HEK293 (cell line): ENCODE measurements at regions of chr10 and their contacts with region 1.

Region 1: GRCh38 chr10:86960003-86960862 is 1.8 kb downstream of the SNCG start:
- H3K4me3 ChIP-seq: no peak overlapping the region
- H3K27ac ChIP-seq: no peak overlapping the region
- H3K4me1 ChIP-seq: no peaks in the 10 kb centered on the region
- CTCF ChIP-seq: peak; percentile 81

Region 2: GRCh38 chr10:86918022-86918471 is 42.2 kb before region 1 on chr10:
- CTCF ChIA-PET with region 1: no interaction called
- POLR2A ChIA-PET with region 1: no interaction called
- H3K4me3 ChIP-seq: no peak overlapping the region
- H3K27ac ChIP-seq: no peak overlapping the region
- H3K4me1 ChIP-seq: no peaks in the 10 kb centered on the region; the same call in 1 of the 2 replicates
- CTCF ChIP-seq: no peak

Region 3: GRCh38 chr10:86970162-86970981 is 10.1 kb after region 1 on chr10:
- CTCF ChIA-PET with region 1: interaction called, 14 read pairs
- POLR2A ChIA-PET with region 1: interaction called, 4 read pairs
- H3K4me3 ChIP-seq: peak overlapping the region; percentile 42
- H3K27ac ChIP-seq: peak overlapping the region; percentile 62; the same call in 1 of the 2 replicates
- H3K4me1 ChIP-seq: peaks cover 2% of the 10 kb centered on the region; the same call in 1 of the 2 replicates
- CTCF ChIP-seq: no peak

Region 4: DNA sequence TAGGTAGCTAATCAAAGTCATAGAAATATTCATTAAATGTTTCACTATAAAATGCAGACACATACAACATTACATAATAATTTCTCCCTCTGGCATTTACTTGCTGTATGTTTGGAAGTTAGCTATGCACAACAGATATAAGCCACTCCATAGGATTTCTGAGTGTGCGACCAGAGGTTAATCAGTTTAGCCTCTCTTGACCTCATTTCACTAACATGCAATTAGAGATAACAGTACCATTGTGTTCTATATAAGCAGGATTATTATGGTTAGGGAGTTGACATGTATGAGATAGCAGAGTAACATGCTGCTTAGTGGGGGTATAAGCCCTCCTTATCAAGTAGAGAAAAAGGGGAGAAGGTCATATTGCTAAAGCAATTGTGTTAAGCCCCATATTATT is 108.0 kb after region 1 on chr10:
- CTCF ChIA-PET with region 1: no interaction called
- POLR2A ChIA-PET with region 1: no interaction called
- H3K4me3 ChIP-seq: no peak overlapping the region
- H3K27ac ChIP-seq: no peak overlapping the region
- H3K4me1 ChIP-seq: no peaks in the 10 kb centered on the region
- CTCF ChIP-seq: no peak

Region 5: GRCh38 chr10:87079106-87079836 is 119.0 kb after region 1 on chr10:
- CTCF ChIA-PET with region 1: no interaction called
- POLR2A ChIA-PET with region 1: no interaction called
- H3K4me3 ChIP-seq: no peak overlapping the region
- H3K27ac ChIP-seq: no peak overlapping the region
- H3K4me1 ChIP-seq: peaks cover 4% of the 10 kb centered on the region; the same call in 1 of the 2 replicates
- CTCF ChIP-seq: no peak